ENCODE measurements at regions of chr5 and their contacts with region 1.

Region 1: GRCh38 chr5:159331093-159331973 is 1.0 kb upstream of the IL12B start:
- DNase-seq: peak; percentile 79
- ATAC-seq: peak; percentile 93
- H3K4me3 Mint-ChIP-seq: peak overlapping the region; percentile 57
- H3K27ac Mint-ChIP-seq: peak overlapping the region; percentile 44
- H3K4me1 Mint-ChIP-seq: peaks cover 18% of the 10 kb centered on the region
- H3K27me3 Mint-ChIP-seq: peaks cover 59% of the 10 kb centered on the region

Region 2: DNA sequence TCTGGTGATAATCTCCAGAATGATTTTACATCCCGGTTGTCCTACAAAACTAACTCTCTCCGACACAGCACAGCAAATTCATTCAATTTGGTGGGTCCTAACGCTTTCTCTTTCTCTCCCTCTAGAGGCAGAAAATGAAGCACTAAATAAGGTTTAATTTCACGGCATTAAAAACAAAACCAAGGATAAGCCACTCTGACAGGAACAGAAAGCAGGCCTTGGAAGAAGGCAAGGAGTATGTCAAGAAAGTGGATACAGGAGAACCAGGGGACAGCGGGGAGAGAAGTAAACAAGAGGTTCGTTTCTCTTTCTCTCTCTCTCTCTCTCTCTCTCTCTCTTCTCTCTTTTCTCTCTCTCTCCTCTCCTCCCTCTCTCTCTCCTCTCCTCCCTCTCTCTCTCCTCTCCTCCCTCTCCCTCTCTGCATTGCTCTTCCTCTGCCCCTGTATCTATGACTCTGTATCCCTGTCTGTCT is 281.5 kb before region 1 on chr5:
- CTCF ChIA-PET with region 1: no interaction called
- DNase-seq: no peak
- ATAC-seq: no peak
- H3K4me3 Mint-ChIP-seq: no peak overlapping the region
- H3K27ac Mint-ChIP-seq: no peak overlapping the region
- H3K4me1 Mint-ChIP-seq: no peaks in the 10 kb centered on the region
- H3K27me3 Mint-ChIP-seq: peaks cover 71% of the 10 kb centered on the region

Region 3: DNA sequence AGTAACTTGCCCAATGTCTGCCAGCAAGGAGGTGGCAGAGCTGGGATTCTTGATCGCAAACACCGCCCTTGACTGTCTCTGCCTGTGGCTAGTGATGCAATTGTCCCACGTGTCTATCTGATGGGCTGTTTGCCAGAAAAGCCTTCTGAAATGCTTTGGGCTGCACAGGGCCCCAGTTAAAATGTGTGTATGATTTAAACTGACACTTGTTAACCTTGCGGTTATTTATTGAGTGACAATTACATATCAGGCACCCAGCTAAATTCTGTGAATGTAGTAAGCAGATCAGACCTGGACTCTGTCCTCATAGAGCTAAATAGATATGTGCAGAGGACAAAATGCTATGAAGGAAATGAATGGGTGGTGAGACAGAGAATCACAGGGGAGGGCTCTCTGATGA is 10.6 kb after region 1 on chr5:
- CTCF ChIA-PET with region 1: interaction called, 12 read pairs
- DNase-seq: peak; percentile 70
- ATAC-seq: peak; percentile 23
- H3K4me3 Mint-ChIP-seq: no peak overlapping the region
- H3K27ac Mint-ChIP-seq: peak overlapping the region; percentile 1
- H3K4me1 Mint-ChIP-seq: peaks cover 58% of the 10 kb centered on the region
- H3K27me3 Mint-ChIP-seq: peaks cover 11% of the 10 kb centered on the region

Region 4: DNA sequence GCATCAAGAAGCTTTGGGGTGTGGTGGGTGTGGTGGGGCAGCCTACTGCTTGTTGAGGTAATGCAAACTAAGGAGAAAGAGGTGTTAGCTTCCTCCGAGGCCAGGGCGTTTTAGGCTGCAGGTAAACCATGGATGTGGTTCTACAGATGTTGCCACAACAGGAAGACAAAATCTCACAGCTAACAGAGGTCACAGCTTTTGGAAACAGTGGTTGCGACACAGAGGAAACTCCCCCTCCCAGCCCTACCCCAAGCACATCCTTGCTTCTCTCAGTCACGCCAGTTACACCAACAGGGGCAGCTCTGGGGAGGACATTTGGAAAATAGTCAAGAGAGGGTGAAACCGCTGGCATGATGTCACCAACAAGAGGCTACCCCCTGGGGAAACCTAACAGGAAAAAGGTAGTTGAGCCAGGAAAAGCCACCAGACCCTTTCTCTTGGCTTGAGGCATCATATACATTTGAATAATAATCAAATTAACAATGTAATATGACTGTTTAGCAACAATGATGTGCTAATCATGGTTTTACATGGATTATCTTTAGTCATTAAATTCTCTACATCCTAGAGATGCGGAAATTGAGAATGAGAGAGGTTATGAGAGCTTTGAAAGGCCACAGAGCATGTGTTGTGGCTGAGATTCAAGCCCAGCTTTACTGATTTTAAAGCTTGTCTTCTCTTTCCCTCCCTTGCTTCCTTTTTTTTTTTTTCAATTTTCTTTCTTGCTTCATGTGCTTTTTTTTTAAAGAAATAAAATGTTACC is 81.1 kb after region 1 on chr5:
- CTCF ChIA-PET with region 1: interaction called, 38 read pairs
- DNase-seq: peak; percentile 91
- ATAC-seq: peak; percentile 89
- H3K4me3 Mint-ChIP-seq: peak overlapping the region; percentile 1
- H3K27ac Mint-ChIP-seq: peak overlapping the region; percentile 79
- H3K4me1 Mint-ChIP-seq: peaks cover 55% of the 10 kb centered on the region
- H3K27me3 Mint-ChIP-seq: peaks cover 58% of the 10 kb centered on the region

Region 5: GRCh38 chr5:159510282-159510681 is 178.9 kb after region 1 on chr5:
- CTCF ChIA-PET with region 1: no interaction called
- DNase-seq: no peak
- ATAC-seq: no peak
- H3K4me3 Mint-ChIP-seq: no peak overlapping the region
- H3K27ac Mint-ChIP-seq: no peak overlapping the region
- H3K4me1 Mint-ChIP-seq: no peaks in the 10 kb centered on the region
- H3K27me3 Mint-ChIP-seq: peaks cover 32% of the 10 kb centered on the region

Region 6: DNA sequence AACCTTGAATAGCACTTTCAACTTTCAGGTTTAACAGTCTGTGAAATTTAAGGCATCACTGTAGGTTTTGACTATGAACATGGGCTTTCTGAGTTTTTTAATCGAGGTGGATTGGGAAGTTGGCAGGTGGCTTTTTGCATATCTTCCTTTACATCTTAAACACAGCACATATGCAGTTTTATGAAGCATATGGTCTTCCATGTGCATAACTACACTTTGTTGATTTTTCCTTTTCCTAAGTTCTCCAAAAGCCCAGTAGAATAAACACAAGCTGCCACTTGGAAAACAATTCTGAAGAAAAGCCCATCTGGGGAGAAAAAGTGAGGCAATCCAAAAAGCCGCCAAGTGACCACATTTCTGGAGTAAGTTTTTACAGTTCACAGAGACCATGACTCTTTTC is 235.5 kb after region 1 on chr5:
- CTCF ChIA-PET with region 1: no interaction called
- DNase-seq: no peak
- ATAC-seq: no peak
- H3K4me3 Mint-ChIP-seq: no peak overlapping the region
- H3K27ac Mint-ChIP-seq: no peak overlapping the region
- H3K4me1 Mint-ChIP-seq: no peaks in the 10 kb centered on the region
- H3K27me3 Mint-ChIP-seq: peaks cover 18% of the 10 kb centered on the region